ENCODE measurements at regions of chr12 and their contacts with region 1.

Region 1: GRCh38 chr12:101839324-101840283 is 8.8 kb upstream of the GNPTAB start:
- DNase-seq: no peak
- H3K4me3 ChIP-seq: no peak overlapping the region
- H3K27ac ChIP-seq: peak overlapping the region in 4 of 8 donors; percentile 58 to 77 (median 68)
- H3K4me1 ChIP-seq: peaks cover 8 to 28% (median 18%) of the 10 kb centered on the region in 6 donors
- H3K27me3 ChIP-seq: no peaks in the 10 kb centered on the region
- CTCF ChIP-seq: peak; percentile 69 to 92 (median 86)
- POLR2A ChIP-seq: no peak

Region 2: DNA sequence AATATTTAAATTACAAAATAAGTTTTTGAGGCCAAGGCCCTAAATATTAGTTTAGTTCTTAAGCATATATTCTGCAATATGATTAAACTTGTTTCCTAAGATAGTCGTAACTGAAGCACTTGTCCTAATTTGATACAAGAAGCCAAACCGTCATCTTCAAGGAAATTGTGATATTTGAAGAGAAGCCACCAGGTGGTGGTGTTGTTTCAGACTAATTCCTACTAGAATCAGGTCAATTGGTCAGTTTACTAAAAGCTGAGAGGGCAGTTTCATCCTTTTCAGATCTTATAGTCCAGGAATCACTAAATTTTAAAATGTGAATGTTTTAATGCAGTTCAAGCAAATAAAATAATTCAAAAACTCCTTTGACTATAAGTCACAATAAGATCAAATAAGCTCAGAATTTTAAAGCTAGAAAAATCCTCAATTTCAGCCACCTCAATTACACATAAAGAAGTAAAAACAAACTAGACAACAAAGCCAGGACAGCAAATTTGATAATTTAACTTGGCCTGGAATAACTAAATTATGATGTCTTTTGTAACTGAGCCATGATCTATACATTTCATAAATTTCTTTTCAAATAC is 425.0 kb before region 1 on chr12:
- intact Hi-C with region 1: loop called (anchors 5 kb)
- DNase-seq: no peak
- H3K4me3 ChIP-seq: no peak overlapping the region
- H3K27ac ChIP-seq: no peak overlapping the region
- H3K4me1 ChIP-seq: peaks cover 0 to 4% (median 0%) of the 10 kb centered on the region in 6 donors
- H3K27me3 ChIP-seq: no peaks in the 10 kb centered on the region
- CTCF ChIP-seq: peak in 9 of 11 experiments; percentile 27 to 64 (median 53)
- POLR2A ChIP-seq: no peak

Region 3: DNA sequence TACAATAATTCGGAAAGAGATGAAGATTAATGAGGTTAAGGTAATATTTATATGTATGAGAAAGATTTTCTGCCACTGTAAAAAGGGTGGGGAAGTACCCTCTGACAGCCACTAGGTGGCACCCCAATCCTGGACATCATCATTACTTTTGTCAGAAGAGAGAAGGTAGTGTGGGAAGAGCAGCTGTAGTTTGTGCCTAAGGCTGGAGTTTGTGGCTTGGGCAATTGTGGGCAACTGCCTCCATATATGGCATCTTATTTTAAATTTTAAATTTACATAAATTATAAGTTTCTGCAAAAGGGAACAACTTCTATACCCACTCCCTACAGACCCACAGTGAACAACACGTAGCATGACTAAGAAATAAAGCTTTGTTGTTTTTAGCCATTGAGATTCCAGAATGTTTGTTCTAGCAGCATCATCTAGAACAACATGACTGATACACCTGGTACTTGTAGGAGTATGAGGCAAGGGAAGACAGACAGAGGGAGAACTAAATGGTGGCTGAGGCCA is 65.9 kb before region 1 on chr12:
- intact Hi-C with region 1: loop called (anchors 5 kb)
- DNase-seq: no peak
- H3K4me3 ChIP-seq: no peak overlapping the region
- H3K27ac ChIP-seq: no peak overlapping the region
- H3K4me1 ChIP-seq: peaks cover 0 to 46% (median 8%) of the 10 kb centered on the region in 6 donors
- H3K27me3 ChIP-seq: no peaks in the 10 kb centered on the region
- CTCF ChIP-seq: peak; percentile 85 to 97 (median 94)
- POLR2A ChIP-seq: no peak

Region 4: GRCh38 chr12:101919447-101919846 is 79.8 kb after region 1 on chr12:
- intact Hi-C with region 1: no loop called
- DNase-seq: no peak
- H3K4me3 ChIP-seq: no peak overlapping the region
- H3K27ac ChIP-seq: no peak overlapping the region
- H3K4me1 ChIP-seq: peaks cover 0 to 21% (median 11%) of the 10 kb centered on the region in 6 donors
- H3K27me3 ChIP-seq: no peaks in the 10 kb centered on the region
- CTCF ChIP-seq: no peak
- POLR2A ChIP-seq: no peak

Region 5: GRCh38 chr12:102215992-102216691 is 376.5 kb after region 1 on chr12:
- intact Hi-C with region 1: no loop called
- DNase-seq: no peak
- H3K4me3 ChIP-seq: no peak overlapping the region
- H3K27ac ChIP-seq: no peak overlapping the region
- H3K4me1 ChIP-seq: no peaks in the 10 kb centered on the region
- H3K27me3 ChIP-seq: no peaks in the 10 kb centered on the region
- CTCF ChIP-seq: no peak
- POLR2A ChIP-seq: no peak

Measured in spleen (tissue), 13 donors.